Activated B cell treated with CpG ODN at 0.5 μM for 24 hours (primary cell): ENCODE measurements at regions of chr6 and their contacts with region 1.

Region 1: GRCh38 chr6:134938896-134939295 is 11.0 kb downstream of the ALDH8A1 start:
- DNase-seq: no peak
- ATAC-seq: peak; percentile 54
- H3K4me3 Mint-ChIP-seq: no peak overlapping the region
- H3K27ac Mint-ChIP-seq: no peak overlapping the region
- H3K4me1 Mint-ChIP-seq: peaks cover 3% of the 10 kb centered on the region
- H3K27me3 Mint-ChIP-seq: no peaks in the 10 kb centered on the region
- CTCF ChIP-seq: no peak

Region 2: GRCh38 chr6:134111062-134111677 is 827.7 kb before region 1 on chr6:
- CTCF ChIA-PET with region 1: interaction called, 26 read pairs
- POLR2A ChIA-PET with region 1: interaction called, 10 read pairs
- intact Hi-C with region 1: loop called (anchors 1 kb)
- DNase-seq: no peak
- ATAC-seq: no peak
- H3K4me3 Mint-ChIP-seq: no peak overlapping the region
- H3K27ac Mint-ChIP-seq: no peak overlapping the region
- H3K4me1 Mint-ChIP-seq: no peaks in the 10 kb centered on the region
- H3K27me3 Mint-ChIP-seq: peaks cover 17% of the 10 kb centered on the region
- CTCF ChIP-seq: peak; percentile 27

Region 3: DNA sequence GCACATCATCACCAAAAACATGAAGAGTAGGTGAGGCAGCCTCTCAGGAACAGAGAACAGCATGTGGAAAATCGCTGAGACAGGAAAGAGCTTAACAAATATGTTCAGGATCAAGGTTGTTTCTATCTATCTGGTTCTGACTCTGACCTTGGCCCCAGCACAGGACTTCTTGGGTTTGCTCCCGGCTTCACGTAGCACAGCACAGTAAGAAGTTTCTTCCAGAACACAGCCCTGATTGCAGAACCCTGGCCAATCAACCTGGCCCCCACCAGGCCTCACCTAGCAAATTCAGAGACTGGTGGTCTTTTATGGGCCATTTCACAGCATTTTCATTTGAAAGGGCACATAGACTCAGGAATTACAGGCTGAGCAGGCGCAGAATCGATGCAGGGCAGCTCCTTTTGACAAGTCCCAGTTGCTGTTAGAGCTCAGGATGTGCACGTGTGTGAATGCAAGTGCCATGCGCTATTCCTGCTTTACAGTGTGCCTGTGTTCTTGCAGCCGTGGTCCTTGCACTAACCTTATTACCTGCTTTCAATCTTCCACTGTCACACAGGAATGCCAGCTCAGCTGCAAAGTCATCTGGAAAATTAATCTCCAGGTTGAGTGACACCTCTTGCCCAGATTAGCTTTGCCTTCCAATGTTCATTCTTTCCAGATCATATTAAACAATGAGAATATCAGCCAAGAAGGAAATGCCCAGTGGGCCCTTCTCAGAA is 786.0 kb before region 1 on chr6:
- CTCF ChIA-PET with region 1: interaction called, 80 read pairs
- POLR2A ChIA-PET with region 1: no interaction called
- intact Hi-C with region 1: loop called (anchors 1 kb)
- DNase-seq: no peak
- ATAC-seq: no peak
- H3K4me3 Mint-ChIP-seq: no peak overlapping the region
- H3K27ac Mint-ChIP-seq: no peak overlapping the region
- H3K4me1 Mint-ChIP-seq: no peaks in the 10 kb centered on the region
- H3K27me3 Mint-ChIP-seq: no peaks in the 10 kb centered on the region
- CTCF ChIP-seq: no peak

Region 4: GRCh38 chr6:134822920-134823709 is 115.8 kb before region 1 on chr6:
- CTCF ChIA-PET with region 1: interaction called, 15 read pairs
- POLR2A ChIA-PET with region 1: no interaction called
- intact Hi-C with region 1: loop called (anchors 2 kb)
- DNase-seq: no peak
- ATAC-seq: peak; percentile 77
- H3K4me3 Mint-ChIP-seq: no peak overlapping the region
- H3K27ac Mint-ChIP-seq: no peak overlapping the region
- H3K4me1 Mint-ChIP-seq: peaks cover 10% of the 10 kb centered on the region
- H3K27me3 Mint-ChIP-seq: peaks cover 2% of the 10 kb centered on the region
- CTCF ChIP-seq: peak; percentile 45

Region 5: GRCh38 chr6:134928151-134928900 is 10.6 kb before region 1 on chr6:
- CTCF ChIA-PET with region 1: interaction called, 21 read pairs
- POLR2A ChIA-PET with region 1: no interaction called
- intact Hi-C with region 1: no loop called
- DNase-seq: no peak
- ATAC-seq: no peak
- H3K4me3 Mint-ChIP-seq: no peak overlapping the region
- H3K27ac Mint-ChIP-seq: no peak overlapping the region
- H3K4me1 Mint-ChIP-seq: no peaks in the 10 kb centered on the region
- H3K27me3 Mint-ChIP-seq: no peaks in the 10 kb centered on the region
- CTCF ChIP-seq: no peak

Region 6: GRCh38 chr6:135202836-135203235 is 263.9 kb after region 1 on chr6:
- CTCF ChIA-PET with region 1: no interaction called
- POLR2A ChIA-PET with region 1: no interaction called
- intact Hi-C with region 1: no loop called
- DNase-seq: no peak
- ATAC-seq: no peak
- H3K4me3 Mint-ChIP-seq: no peak overlapping the region
- H3K27ac Mint-ChIP-seq: no peak overlapping the region
- H3K4me1 Mint-ChIP-seq: no peaks in the 10 kb centered on the region
- H3K27me3 Mint-ChIP-seq: no peaks in the 10 kb centered on the region
- CTCF ChIP-seq: no peak